IMR-90 (cell line): ENCODE measurements at regions of chr13 and their contacts with region 1.

Region 1: GRCh38 chr13:27533155-27533643 is 82.8 kb upstream of the MTIF3 start:
- DNase-seq: peak; percentile 59
- ATAC-seq: peak; percentile 100
- H3K4me3 ChIP-seq: no peak overlapping the region
- H3K27ac ChIP-seq: no peak overlapping the region
- H3K4me1 ChIP-seq: no peaks in the 10 kb centered on the region
- H3K27me3 ChIP-seq: peaks cover 4% of the 10 kb centered on the region
- CTCF ChIP-seq: peak; percentile 94
- POLR2A ChIP-seq: 0 out of 2 replicates have a peak, but pooled peaks have one; percentile 32
- RAD21 ChIP-seq: peak; percentile 84

Region 2: DNA sequence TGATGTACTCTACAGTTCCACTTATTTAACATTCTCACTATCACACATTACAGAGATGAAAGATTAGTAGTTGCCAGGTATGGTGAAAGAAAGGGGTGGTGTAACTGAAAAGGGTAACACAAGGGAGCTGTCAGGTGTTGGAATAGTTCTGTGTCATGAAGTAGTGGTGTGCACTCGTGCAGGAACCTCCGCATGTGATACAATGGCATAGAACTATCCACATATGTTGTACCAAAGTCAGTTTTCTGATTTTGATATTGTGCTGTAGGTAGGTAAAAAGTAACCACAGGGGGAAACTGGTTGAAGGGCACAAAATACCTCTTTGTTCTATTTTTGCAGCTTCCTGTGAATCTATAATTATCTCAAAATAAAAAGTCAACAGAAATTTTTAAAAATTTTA is 306.2 kb before region 1 on chr13:
- CTCF ChIA-PET with region 1: no interaction called
- POLR2A ChIA-PET with region 1: no interaction called
- dilution Hi-C with region 1: no loop called
- in situ Hi-C with region 1: no loop called
- intact Hi-C with region 1: no loop called
- DNase-seq: no peak
- ATAC-seq: no peak
- H3K4me3 ChIP-seq: no peak overlapping the region
- H3K27ac ChIP-seq: no peak overlapping the region
- H3K4me1 ChIP-seq: no peaks in the 10 kb centered on the region
- H3K27me3 ChIP-seq: no peaks in the 10 kb centered on the region; the same call in 1 of the 2 replicates
- CTCF ChIP-seq: no peak
- POLR2A ChIP-seq: no peak
- RAD21 ChIP-seq: no peak

Region 3: DNA sequence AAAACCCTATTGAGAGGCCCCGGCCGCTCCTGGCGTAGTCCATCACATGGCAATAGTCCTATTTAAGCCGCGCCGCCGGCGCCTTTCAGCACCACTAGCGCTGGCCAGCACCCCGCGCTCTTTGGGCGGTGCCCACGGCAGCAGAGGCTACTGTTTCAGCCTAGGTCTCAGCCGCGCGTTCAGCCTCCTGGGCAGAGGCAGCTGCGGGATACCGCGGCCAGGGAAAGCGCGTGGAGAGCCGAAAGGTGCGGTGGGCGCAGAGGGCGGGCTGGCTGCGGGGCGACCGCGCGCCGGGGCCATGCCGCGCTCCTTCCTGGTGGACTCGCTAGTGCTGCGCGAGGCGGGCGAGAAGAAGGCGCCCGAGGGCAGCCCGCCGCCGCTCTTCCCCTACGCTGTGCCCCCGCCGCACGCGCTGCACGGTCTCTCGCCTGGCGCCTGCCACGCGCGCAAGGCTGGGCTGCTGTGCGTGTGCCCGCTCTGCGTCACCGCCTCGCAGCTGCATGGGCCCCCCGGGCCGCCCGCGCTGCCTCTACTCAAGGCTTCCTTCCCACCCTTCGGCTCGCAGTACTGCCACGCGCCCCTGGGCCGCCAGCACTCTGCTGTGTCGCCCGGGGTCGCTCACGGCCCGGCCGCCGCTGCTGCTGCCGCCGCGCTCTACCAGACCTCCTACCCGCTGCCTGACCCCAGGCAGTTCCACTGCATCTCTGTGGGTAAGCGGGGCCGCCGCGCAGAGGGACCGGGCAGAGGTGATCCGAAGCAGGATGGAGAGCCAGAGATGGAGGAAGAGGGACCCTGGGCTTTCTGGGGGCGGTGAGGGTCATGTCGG is 259.4 kb after region 1 on chr13 and contains the start of gene GSX1:
- CTCF ChIA-PET with region 1: no interaction called
- POLR2A ChIA-PET with region 1: no interaction called
- dilution Hi-C with region 1: no loop called
- in situ Hi-C with region 1: no loop called
- intact Hi-C with region 1: loop called (anchors 10 kb)
- DNase-seq: peak; percentile 63
- ATAC-seq: peak; percentile 97
- H3K4me3 ChIP-seq: no peak within 1 kb of the TSS
- H3K27ac ChIP-seq: no peak within 1 kb of the TSS
- H3K4me1 ChIP-seq: no peaks in the 10 kb centered on the region; the same call in 1 of the 2 replicates
- H3K27me3 ChIP-seq: peaks cover 89% of the 10 kb centered on the region
- CTCF ChIP-seq: no peak
- POLR2A ChIP-seq: no peak
- RAD21 ChIP-seq: no peak
- total RNA-seq, gene GSX1: not detected in 2 replicates

Region 4: DNA sequence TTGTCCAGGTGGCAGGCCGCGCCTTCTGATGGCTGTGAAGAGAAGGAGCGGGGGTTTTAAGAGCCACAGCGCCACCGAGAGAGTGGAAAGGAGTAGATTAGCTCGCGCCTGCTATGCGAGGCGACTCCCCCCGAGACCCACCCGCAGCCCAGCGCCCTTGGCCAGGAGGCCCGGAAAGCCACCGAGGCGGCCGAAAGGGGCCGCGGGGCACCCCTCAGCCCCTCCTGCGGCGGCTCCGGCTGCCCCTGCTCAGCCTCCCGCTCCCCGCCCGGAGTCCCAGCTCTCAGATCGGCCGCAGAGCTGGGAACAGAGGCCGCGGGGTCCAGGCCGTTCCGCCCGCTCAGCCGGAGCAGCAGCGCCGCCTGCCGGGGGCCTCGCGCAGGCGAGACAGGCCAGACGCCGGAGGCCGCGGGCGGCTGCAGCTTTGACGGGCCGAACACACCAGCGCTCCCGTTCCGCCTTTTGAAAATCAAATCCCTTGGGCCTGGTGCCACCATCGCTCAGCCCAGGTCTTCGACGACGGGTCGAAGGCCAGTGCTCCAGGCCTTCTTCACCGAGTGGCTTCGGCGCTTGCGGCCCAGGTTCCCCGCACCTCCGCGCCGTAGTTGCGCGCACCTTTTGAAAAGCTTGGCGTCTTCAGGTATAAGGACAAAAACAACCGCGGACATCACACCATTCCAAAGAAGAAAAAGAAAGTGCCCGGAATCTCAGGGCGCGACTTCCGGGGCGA is 420.6 kb after region 1 on chr13:
- CTCF ChIA-PET with region 1: no interaction called
- POLR2A ChIA-PET with region 1: no interaction called
- dilution Hi-C with region 1: no loop called
- in situ Hi-C with region 1: no loop called
- intact Hi-C with region 1: no loop called
- DNase-seq: peak; percentile 55
- ATAC-seq: peak; percentile 99
- H3K4me3 ChIP-seq: peak overlapping the region; percentile 45
- H3K27ac ChIP-seq: no peak overlapping the region
- H3K4me1 ChIP-seq: no peaks in the 10 kb centered on the region
- H3K27me3 ChIP-seq: peaks cover 54% of the 10 kb centered on the region
- CTCF ChIP-seq: peak; percentile 81
- POLR2A ChIP-seq: no peak
- RAD21 ChIP-seq: peak; percentile 66

Region 5: GRCh38 chr13:27997904-27998522 is 464.8 kb after region 1 on chr13:
- CTCF ChIA-PET with region 1: no interaction called
- POLR2A ChIA-PET with region 1: no interaction called
- dilution Hi-C with region 1: no loop called
- in situ Hi-C with region 1: loop called (anchors 25 kb)
- intact Hi-C with region 1: no loop called
- DNase-seq: peak; percentile 28
- ATAC-seq: peak; percentile 88
- H3K4me3 ChIP-seq: no peak overlapping the region
- H3K27ac ChIP-seq: no peak overlapping the region
- H3K4me1 ChIP-seq: no peaks in the 10 kb centered on the region
- H3K27me3 ChIP-seq: peaks cover 14% of the 10 kb centered on the region
- CTCF ChIP-seq: peak; percentile 52
- POLR2A ChIP-seq: no peak
- RAD21 ChIP-seq: peak; percentile 47